ENCODE measurements at regions of chr7 and their contacts with region 1.

Region 1: DNA sequence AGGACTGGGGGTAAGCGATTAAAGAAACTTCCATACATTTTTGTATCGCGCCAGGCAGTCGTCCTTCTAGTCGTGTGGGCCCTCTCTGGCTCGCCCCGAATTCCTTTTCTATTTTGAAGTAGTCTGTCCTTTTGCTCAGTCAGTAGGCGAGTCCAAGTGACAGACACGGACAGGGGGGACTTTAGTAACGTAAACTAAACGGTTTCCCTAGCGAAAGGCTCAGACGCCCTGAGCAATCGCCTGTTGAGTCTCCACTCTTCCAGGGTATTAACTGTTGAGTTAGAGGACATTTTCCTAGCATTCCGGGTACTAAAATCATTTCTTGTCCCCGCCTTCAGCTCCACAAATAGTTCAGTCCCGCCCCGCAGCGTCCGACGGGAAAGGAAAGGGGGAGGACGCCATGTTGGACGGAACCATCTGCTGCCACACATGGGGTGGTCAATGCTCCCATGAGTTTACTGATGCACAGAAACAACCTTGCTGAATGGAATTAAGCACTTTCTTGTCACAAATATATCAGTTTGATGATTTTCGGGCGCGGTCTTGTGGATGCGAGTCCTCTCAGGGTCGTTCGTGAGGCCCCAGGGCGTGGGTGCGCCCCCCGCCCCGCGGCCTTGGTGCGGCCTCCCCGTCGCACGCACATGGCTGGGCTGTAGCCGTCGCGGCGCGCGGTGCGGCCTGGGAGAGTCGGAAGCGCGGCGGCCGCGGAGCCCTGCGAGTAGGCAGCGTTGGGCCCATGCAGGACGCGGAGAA is at the start of gene EIF3B:
- DNase-seq: peak; percentile 76
- H3K4me3 ChIP-seq: peak within 1 kb of the TSS; percentile 92 to 97
- H3K27ac ChIP-seq: peak within 1 kb of the TSS; percentile 99
- H3K4me1 ChIP-seq: peaks cover 5% of the 10 kb centered on the region
- H3K27me3 ChIP-seq: no peaks in the 10 kb centered on the region
- CTCF ChIP-seq: peak in 2 of 4 experiments; percentile 12 to 29
- POLR2A ChIP-seq: peak; percentile 24
- total RNA-seq, gene EIF3B: 141 to 220 TPM

Region 2: DNA sequence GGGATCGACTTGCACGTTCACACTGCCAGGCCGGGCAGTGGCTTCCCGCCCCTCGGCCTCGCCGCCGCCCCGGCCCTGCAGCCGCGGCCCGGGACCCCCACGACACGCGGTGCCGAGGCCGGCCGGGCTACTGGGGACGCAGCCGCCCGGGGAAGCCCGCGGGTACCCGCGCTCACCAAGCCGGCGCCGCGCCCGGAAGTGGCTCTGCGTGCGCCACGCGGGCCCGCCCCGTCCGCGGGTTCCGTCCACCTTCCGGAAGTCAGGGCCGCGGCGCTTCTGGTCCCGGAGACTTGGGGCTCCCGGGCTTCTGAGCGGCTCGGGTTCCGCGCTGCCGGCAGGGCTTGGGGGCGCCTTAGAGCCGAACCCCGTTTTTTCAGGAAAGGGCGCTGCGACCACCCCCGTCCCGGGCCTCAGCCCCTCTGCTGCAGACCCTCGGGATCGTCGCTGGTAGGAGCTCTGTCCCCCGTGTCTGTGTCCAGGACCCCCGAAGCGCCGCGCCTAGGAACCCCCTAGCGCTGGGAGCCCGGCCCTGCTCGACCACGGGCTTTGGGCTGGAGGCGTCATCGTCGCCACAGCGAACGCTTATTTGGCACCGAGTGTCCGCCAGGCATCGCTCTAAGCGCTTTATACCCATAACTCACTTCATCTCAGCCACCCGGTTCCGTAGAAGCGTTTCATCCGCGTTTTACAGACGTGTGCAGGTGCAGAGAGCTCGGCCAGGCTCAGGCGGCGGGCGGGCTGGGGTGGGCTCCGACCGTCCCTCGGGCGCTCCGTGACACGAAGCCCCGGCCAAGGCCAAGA is 784.3 kb before region 1 on chr7 and contains the start of gene PSMG3:
- intact Hi-C with region 1: loop called (anchors 10 kb)
- DNase-seq: peak; percentile 89
- H3K4me3 ChIP-seq: peak within 1 kb of the TSS; percentile 92 to 96
- H3K27ac ChIP-seq: peak within 1 kb of the TSS; percentile 92 to 93
- H3K4me1 ChIP-seq: peaks cover 10% of the 10 kb centered on the region
- H3K27me3 ChIP-seq: no peaks in the 10 kb centered on the region
- CTCF ChIP-seq: peak in 3 of 4 experiments; percentile 21 to 51 (median 49)
- POLR2A ChIP-seq: peak; percentile 83
- total RNA-seq, gene PSMG3: 50.0 to 51.6 TPM

Region 3: DNA sequence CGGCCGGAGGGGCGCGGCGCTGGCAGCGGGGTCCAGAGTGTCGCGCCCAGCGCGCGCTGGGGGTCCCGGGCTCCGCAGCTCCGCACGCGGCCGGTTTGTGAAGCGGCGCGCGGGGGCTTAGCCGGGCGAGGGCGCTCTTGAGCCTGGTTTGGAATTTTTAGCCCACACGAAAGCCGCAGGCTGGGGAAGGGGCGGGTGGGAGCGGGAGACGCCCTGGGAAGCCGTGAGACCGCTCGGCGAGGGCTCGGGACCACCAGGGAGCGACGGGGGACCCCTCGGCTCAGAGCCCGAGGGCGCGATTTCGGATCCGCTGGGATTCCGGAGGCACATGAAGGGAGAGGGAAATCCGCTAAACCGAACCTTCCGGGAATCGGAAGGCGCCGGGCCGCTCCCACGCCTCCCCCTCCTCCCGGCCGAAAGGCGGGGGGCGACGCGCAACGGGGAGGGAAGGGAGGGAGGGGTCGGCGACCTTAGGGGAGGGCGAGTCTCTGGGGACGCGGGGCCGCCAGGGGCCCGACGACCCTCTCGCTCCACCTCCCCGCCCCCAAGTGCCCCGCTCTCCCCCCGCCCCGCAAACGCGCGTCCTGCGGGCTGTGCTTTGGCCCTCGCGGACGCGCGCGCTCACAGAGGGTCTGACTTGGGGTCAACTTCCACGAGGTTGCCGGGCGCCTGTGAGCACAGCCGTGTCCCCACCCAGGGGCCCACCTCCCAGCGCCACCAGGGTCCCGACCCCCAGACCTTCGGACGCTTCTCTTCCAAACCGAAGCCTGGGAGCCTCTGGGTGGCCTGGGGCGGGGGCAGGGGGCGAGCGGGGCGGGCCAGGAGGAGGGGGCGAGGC is 689.4 kb before region 1 on chr7:
- intact Hi-C with region 1: loop called (anchors 10 kb)
- DNase-seq: peak; percentile 39
- H3K4me3 ChIP-seq: peak overlapping the region; percentile 31
- H3K27ac ChIP-seq: no peak overlapping the region
- H3K4me1 ChIP-seq: peaks cover 17% of the 10 kb centered on the region
- H3K27me3 ChIP-seq: peaks cover 16% of the 10 kb centered on the region
- CTCF ChIP-seq: peak; percentile 47 to 73 (median 63)
- POLR2A ChIP-seq: no peak

Region 4: DNA sequence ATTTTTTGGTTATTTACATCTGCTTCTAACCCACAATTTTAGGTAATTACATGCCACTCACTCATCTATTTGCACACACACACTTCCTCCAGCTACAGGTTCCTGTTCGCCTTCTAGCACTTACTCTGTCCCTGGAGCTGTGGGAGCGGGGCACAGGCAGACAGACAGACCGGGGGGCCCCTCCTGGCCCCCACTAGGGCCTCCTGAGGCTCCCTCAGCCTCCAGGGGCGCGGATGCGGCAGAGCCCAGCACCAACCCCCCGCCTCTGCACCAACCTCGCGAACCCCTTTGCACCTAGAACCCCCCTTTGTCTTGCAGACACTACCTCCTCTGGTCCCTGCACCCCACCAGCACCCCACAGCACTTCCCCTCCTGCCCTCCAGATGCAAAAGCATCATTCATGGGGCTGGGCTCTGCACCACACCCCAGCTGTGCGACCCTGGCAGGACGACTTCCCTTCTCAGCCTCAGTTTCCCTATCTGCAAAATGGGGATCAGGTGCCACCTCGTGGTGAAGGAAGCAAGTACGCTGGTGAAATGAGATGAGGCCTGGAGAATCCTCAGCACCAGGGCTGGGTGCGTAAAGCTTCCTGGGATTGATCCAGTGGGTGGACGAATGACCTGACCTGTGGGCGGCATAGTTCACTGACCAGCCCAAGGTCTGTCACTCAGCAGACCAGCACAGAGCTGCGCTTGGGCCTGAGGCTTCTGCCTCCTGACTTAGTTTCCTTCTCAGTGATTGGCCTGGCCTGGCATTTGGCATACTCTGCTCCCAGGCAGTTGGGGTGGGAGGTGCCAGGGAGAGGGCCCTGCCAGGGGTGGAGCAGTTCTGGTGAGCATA is 646.4 kb before region 1 on chr7:
- intact Hi-C with region 1: no loop called
- DNase-seq: no peak
- H3K4me3 ChIP-seq: no peak overlapping the region
- H3K27ac ChIP-seq: no peak overlapping the region
- H3K4me1 ChIP-seq: no peaks in the 10 kb centered on the region
- H3K27me3 ChIP-seq: no peaks in the 10 kb centered on the region
- CTCF ChIP-seq: no peak
- POLR2A ChIP-seq: no peak

Region 5: GRCh38 chr7:2248984-2249694 is 105.2 kb before region 1 on chr7:
- intact Hi-C with region 1: loop called (anchors 5 kb)
- DNase-seq: no peak
- H3K4me3 ChIP-seq: no peak overlapping the region
- H3K27ac ChIP-seq: no peak overlapping the region
- H3K4me1 ChIP-seq: no peaks in the 10 kb centered on the region
- H3K27me3 ChIP-seq: no peaks in the 10 kb centered on the region
- CTCF ChIP-seq: peak in 1 of 4 experiments; percentile 8
- POLR2A ChIP-seq: no peak

Region 6: DNA sequence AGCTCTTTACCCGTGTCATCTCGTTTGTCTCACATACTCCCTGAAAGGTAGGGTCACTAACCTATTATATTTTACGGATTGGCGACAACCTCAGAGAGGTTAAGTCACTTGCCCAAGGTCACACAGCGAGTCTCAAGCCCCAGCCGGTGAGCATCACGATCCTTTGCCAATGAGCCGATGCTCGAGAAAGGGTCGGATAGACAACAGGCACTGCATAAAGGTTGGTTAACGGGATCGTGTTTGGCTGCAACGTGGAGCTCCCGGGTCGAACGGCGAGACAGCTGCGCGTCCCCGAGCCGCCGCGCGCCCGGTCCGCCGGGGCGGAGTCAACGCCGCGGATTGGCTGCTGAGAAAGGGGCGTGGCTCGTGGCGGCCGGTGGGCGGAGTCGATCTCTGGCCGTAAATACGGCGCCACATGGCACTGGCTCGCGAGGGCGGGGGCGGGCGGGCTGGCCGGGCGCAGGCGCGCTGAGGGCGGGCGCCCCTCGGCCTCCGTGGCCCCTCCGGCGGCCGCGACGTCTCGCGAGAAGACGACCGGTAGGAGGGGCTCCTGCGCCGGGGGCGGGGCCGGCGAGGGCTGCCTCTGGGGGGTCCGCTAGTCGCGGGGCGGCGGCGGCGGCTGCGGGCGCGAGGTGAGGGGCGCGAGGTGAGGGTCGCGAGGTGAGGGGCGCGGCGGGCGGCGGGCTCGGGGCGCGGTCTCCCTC is 48.8 kb after region 1 on chr7 and contains the start of gene CHST12:
- intact Hi-C with region 1: loop called (anchors 5 kb)
- DNase-seq: peak; percentile 94
- H3K4me3 ChIP-seq: peak within 1 kb of the TSS; percentile 89 to 99
- H3K27ac ChIP-seq: peak within 1 kb of the TSS; percentile 78 to 83
- H3K4me1 ChIP-seq: peaks cover 8% of the 10 kb centered on the region
- H3K27me3 ChIP-seq: no peaks in the 10 kb centered on the region
- CTCF ChIP-seq: no peak
- POLR2A ChIP-seq: peak; percentile 34
- total RNA-seq, gene CHST12: 22.4 to 36.1 TPM